Panc1 (cell line): ENCODE measurements at regions of chr4 and their contacts with region 1.

Region 1: DNA sequence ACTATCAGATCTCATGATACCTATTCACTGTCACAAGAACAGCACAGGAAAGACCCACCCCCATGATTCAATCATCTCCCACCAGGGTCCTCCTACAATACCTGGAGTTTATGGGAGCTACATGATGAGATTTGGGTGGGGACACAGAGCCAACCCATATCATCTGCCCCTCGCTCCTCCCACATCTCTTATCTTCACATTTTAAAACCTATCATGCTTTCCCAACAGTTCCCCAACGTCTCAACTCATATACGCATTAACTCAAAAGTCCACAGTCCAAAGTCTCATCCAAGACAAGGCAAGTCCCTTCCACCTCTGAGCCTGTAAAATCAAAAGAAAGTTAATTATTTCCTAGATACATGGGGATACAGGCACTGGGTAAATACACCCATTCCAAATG is 1185.2 kb downstream of the PCDH7 start:
- DNase-seq: no peak
- ATAC-seq: no peak
- H3K4me3 ChIP-seq: no peak overlapping the region
- H3K27ac ChIP-seq: no peak overlapping the region
- H3K4me1 ChIP-seq: no peaks in the 10 kb centered on the region
- H3K27me3 ChIP-seq: no peaks in the 10 kb centered on the region
- CTCF ChIP-seq: no peak

Region 2: GRCh38 chr4:30939069-30939468 is 966.3 kb before region 1 on chr4:
- CTCF ChIA-PET with region 1: no interaction called
- POLR2A ChIA-PET with region 1: no interaction called
- in situ Hi-C with region 1: no loop called
- intact Hi-C with region 1: no loop called
- DNase-seq: no peak
- ATAC-seq: no peak
- H3K4me3 ChIP-seq: no peak overlapping the region
- H3K27ac ChIP-seq: peak overlapping the region; percentile 48; the same call in 1 of the 2 replicates
- H3K4me1 ChIP-seq: no peaks in the 10 kb centered on the region; the same call in 1 of the 2 replicates
- H3K27me3 ChIP-seq: no peaks in the 10 kb centered on the region
- CTCF ChIP-seq: no peak

Region 3: GRCh38 chr4:31793907-31794306 is 111.5 kb before region 1 on chr4:
- CTCF ChIA-PET with region 1: no interaction called
- POLR2A ChIA-PET with region 1: interaction called, 14 read pairs
- in situ Hi-C with region 1: no loop called
- intact Hi-C with region 1: no loop called
- DNase-seq: no peak
- ATAC-seq: no peak
- H3K4me3 ChIP-seq: no peak overlapping the region
- H3K27ac ChIP-seq: no peak overlapping the region
- H3K4me1 ChIP-seq: no peaks in the 10 kb centered on the region
- H3K27me3 ChIP-seq: no peaks in the 10 kb centered on the region
- CTCF ChIP-seq: peak; percentile 6; the same call in 1 of the 2 replicates